Activated T-helper 1 cell treated with anti-CD3 and anti-CD28 coated beads, Interleukin-12 subunit alpha, Interleukin-12 subunit beta, Interleukin-2, Interleukin-4 antibody, amounts not matched to agents 30 ng/mL and 10 ng/mL and 1 ng/mL, durations not matched to agents 14 hours and 24 hours and 36 hours (primary cell): ENCODE measurements at regions of chr13 and their contacts with region 1.

Region 1: DNA sequence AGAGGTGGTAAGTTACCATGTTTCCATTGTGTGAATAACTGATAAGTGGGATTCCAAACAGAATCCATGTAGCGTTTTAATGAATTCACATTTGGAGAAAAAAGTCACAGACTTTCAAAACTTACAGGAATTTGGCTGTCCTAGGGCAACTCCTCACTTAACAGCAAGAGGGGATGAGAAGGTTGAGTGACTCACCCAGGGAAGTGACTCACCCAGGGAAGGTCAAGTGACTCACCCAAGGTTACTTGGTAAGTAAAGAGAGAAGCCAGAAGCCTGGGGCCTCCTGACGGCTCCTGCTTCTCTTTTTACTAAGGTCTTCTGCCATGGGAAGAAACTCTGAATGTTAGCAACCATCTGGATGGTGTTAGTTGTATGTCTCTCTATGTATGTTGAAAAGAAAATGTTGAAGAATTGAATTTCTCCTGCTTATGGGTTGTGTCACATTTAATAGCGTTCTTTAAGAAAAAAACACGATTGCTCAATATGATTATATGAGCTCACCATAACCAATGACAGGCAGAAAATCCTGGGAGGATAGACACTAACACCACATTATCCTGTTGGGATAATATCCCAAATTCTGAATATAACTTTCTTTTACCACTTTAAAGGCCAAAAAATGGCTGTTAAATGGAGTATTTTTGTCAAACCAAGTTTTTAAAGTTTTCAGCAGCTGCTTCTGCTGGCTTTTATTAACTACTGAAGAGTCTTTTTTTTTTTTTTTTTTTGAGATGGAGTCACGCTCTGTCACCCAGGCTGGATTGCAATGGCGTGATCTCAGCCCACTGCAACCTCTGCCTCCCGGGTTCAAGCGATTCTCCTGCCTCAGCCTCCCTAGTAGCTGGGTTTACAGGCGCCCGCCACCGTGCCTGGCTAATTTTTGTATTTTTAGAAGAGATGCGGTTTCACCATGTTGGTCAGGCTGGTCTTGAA is 195.6 kb downstream of the GGACT start:
- DNase-seq: peak; percentile 60
- H3K4me3 Mint-ChIP-seq: peak overlapping the region; percentile 53
- H3K27ac Mint-ChIP-seq: peak overlapping the region; percentile 93
- H3K4me1 Mint-ChIP-seq: peaks cover 38% of the 10 kb centered on the region
- H3K27me3 Mint-ChIP-seq: no peaks in the 10 kb centered on the region

Region 2: DNA sequence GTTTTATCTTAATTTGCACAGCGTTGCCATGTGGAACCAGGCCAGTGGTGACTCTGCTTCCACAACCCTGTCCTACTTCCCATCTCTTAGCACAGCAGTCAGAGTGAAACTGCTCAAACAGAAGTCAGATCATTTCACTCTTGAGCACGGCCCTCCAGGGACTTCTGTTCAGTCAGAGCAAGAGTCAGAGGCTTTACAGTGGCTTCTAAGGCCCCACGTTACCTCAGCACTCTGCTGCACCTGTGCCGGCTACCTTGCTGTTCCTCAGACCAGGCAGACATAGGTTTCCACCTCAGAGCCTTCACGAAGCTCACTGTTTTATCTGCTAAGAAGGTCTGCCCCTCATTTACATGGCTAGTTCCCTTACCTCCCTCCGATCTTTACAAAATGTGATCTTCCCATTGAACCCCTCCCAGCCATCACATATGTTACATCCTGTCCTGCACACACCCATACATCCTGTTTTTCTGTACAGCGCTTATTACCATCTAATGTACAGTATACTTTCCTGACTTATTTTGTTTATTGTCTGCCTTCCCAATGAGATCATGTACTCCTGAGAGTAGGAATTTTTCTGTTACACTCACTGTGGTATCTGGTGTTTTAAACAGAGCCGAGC is 850.1 kb before region 1 on chr13:
- intact Hi-C with region 1: loop called (anchors 5 kb)
- DNase-seq: peak; percentile 53
- H3K4me3 Mint-ChIP-seq: peak overlapping the region; percentile 46
- H3K27ac Mint-ChIP-seq: peak overlapping the region; percentile 35
- H3K4me1 Mint-ChIP-seq: peaks cover 43% of the 10 kb centered on the region
- H3K27me3 Mint-ChIP-seq: no peaks in the 10 kb centered on the region

Region 3: DNA sequence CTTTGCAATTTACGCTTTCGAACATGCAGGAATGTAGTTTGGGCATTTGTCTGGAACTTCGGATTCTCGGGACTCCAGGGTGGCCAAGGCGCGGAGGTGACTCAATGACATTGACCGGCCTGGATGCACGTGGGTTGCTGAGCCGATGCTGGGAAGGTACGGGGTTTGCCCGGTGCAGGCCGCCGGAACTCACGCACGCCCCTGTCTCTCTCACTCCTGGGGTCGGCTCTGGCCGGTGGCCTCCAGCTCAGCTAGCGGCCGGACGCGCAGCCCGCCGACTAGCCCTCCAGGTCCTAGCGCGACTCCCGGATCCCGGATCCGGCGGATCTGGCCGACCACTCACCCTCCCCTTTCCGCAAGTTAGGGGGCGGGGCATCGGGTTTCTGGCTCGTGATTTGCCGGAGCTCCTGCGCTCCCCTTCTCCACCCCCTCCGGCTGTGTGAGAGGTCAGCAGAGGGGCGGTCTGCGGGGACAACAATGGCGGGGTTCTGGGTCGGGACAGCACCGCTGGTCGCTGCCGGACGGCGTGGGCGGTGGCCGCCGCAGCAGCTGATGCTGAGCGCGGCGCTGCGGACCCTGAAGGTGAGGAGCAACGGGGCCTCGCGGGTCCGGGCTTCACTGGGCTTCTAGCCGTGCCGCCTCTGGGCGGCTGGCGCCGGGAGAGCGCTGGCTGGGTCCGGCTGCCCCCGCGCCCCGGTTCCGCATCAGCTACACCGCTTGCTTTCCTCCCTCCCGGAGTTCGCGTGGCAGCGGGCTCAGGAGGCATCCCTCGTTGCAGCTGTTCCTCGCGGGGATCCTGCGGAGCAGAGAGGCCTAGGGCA is 304.1 kb before region 1 on chr13 and contains the start of gene PCCA:
- intact Hi-C with region 1: loop called (anchors 1 kb)
- DNase-seq: peak; percentile 80
- H3K4me3 Mint-ChIP-seq: peak within 1 kb of the TSS; percentile 92
- H3K27ac Mint-ChIP-seq: peak within 1 kb of the TSS; percentile 87
- H3K4me1 Mint-ChIP-seq: peaks cover 24% of the 10 kb centered on the region
- H3K27me3 Mint-ChIP-seq: peaks cover 8% of the 10 kb centered on the region
- total RNA-seq, gene PCCA: 8.6 and 9.7 TPM in 2 replicates

Region 4: DNA sequence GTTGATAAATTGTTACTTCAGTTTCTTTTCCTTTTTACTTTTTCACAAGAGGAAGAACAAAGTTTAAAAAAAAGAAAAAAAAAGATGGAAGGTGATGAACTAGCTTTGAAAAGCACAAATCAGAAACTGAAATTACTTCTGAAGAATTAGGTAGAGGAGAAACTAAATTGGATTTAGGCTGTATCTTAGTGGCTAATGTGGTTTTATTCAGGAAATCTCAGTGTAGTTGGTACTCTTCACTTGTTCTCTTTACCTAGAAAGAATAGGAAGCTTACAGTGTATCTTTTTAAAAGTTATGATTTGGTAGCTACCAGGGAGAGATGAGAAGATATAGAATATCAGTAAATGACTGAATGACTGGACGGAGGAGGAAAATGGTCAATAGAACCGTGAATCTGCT is 52.1 kb before region 1 on chr13:
- intact Hi-C with region 1: loop called (anchors 2 kb)
- DNase-seq: no peak
- H3K4me3 Mint-ChIP-seq: no peak overlapping the region
- H3K27ac Mint-ChIP-seq: no peak overlapping the region
- H3K4me1 Mint-ChIP-seq: peaks cover 27% of the 10 kb centered on the region
- H3K27me3 Mint-ChIP-seq: peaks cover 2% of the 10 kb centered on the region

Region 5: DNA sequence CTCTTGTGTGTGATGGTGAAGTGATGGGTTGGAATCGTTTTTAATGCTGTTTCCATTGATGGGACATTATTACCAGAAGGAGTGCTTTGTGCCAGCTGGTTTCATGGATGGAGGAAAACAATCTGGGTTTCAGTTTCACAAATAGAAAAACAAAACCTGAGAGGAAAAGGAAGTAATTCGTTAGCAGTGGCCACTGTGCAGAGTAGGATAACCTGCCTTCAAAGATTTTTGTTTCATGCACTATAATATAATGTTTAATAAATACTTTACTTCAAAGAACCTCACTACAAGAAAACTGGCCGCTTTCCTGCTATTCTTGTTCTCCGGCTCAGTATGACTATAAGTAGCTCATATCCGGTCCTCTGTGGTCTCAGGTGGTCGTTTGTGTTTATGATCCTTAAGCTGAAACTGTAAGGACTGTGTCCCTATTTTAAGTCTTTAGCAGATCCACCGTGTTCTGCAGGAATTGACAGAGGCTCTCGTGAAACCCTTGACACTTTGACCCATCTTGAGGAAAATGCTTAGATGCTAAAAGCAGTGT is 90.9 kb after region 1 on chr13:
- intact Hi-C with region 1: no loop called
- DNase-seq: no peak
- H3K4me3 Mint-ChIP-seq: peak overlapping the region; percentile 20
- H3K27ac Mint-ChIP-seq: peak overlapping the region; percentile 33
- H3K4me1 Mint-ChIP-seq: peaks cover 34% of the 10 kb centered on the region
- H3K27me3 Mint-ChIP-seq: no peaks in the 10 kb centered on the region

Region 6: DNA sequence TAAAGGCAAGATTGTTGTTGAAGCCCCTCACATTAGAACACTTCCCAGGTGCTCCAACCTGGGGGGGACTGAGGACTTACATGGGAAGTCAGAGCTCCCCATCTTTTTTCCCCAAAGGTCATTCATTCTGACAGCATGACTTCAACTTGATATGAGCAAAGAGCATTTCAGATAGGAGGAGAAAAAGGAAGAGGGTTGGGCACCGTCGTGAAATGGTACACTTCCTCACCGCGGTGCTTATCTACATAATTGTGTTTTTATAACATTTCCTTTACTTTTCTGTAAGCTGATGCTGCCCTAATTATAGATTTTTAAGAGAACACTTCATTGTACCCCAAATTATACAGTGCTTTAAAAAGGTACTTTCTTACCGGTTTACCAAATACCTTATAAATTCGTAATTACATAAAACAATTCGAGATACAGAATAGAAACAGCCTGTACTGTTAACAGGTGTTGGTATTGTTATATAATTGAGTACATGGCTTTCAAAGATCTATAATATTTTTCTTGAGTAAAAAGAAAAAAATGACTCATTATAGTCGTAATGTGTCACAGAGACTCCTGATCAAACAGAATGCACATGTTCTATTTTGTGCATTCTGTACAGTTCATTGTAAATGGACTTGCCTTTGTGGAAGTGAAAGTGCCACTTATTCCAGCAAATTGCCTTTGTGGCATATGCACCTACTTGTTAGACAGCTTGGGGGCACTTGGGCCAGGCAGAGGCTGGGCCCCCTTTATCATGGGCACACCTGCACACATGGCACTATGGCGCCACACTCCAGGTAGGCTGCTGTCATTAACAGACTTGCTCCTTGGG is 113.8 kb after region 1 on chr13:
- intact Hi-C with region 1: loop called (anchors 1 kb)
- DNase-seq: no peak
- H3K4me3 Mint-ChIP-seq: peak overlapping the region; percentile 82
- H3K27ac Mint-ChIP-seq: peak overlapping the region; percentile 87
- H3K4me1 Mint-ChIP-seq: peaks cover 63% of the 10 kb centered on the region
- H3K27me3 Mint-ChIP-seq: peaks cover 3% of the 10 kb centered on the region

Region 7: DNA sequence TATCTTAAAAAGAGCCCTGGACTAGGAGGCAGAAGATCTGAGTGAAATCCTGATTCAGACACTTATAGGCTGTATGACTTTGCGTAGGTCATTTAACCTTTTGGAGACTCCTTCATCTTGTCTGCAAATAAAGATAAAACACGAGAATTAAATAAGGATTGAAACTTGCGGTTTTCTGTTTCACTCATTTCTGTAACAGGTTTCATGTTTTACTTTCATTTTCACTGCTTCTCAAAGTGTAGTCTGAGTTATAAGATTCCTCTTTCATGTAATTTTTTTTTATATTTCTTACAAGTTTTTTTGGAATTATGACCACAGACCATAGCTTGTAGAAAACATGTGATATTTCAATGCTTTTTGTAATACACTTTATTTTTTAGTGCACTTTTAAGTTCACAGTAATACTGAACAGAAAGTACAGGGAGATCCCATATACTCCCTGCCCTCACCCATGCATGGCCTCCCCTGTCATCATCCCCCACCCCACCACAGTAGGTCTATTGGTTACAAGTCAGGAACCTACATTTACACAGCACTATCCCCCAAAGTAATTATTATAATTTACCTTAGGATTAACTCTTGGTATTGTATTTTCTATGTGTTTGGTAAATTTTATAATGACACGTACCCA is 1234.1 kb after region 1 on chr13:
- intact Hi-C with region 1: loop called (anchors 10 kb)
- DNase-seq: no peak
- H3K4me3 Mint-ChIP-seq: no peak overlapping the region
- H3K27ac Mint-ChIP-seq: peak overlapping the region; percentile 69
- H3K4me1 Mint-ChIP-seq: peaks cover 40% of the 10 kb centered on the region
- H3K27me3 Mint-ChIP-seq: peaks cover 19% of the 10 kb centered on the region